Activated naive CD4-positive, alpha-beta T cell treated with anti-CD3 and anti-CD28 coated beads, Interleukin-2, amount 10 ng/mL, durations not matched to agents 7 days and 5 days (primary cell): ENCODE measurements at regions of chr10 and their contacts with region 1.

Region 1: GRCh38 chr10:70115948-70116682 is 16.5 kb downstream of the AIFM2 start:
- DNase-seq: peak; percentile 68
- H3K4me3 Mint-ChIP-seq: no peak overlapping the region
- H3K27ac Mint-ChIP-seq: no peak overlapping the region
- H3K4me1 Mint-ChIP-seq: peaks cover 10% of the 10 kb centered on the region
- H3K27me3 Mint-ChIP-seq: peaks cover 3% of the 10 kb centered on the region

Region 2: GRCh38 chr10:69968830-69969229 is 147.3 kb before region 1 on chr10:
- CTCF ChIA-PET with region 1: no interaction called
- DNase-seq: no peak
- H3K4me3 Mint-ChIP-seq: no peak overlapping the region
- H3K27ac Mint-ChIP-seq: no peak overlapping the region
- H3K4me1 Mint-ChIP-seq: no peaks in the 10 kb centered on the region
- H3K27me3 Mint-ChIP-seq: peaks cover 37% of the 10 kb centered on the region

Region 3: GRCh38 chr10:70093335-70093944 is 22.7 kb before region 1 on chr10:
- CTCF ChIA-PET with region 1: interaction called, 43 read pairs
- DNase-seq: peak; percentile 41
- H3K4me3 Mint-ChIP-seq: peak overlapping the region; percentile 78
- H3K27ac Mint-ChIP-seq: peak overlapping the region; percentile 82
- H3K4me1 Mint-ChIP-seq: peaks cover 37% of the 10 kb centered on the region
- H3K27me3 Mint-ChIP-seq: peaks cover 6% of the 10 kb centered on the region

Region 4: GRCh38 chr10:70135684-70136083 is 19.6 kb after region 1 on chr10:
- CTCF ChIA-PET with region 1: interaction called, 17 read pairs
- DNase-seq: no peak
- H3K4me3 Mint-ChIP-seq: no peak overlapping the region
- H3K27ac Mint-ChIP-seq: no peak overlapping the region
- H3K4me1 Mint-ChIP-seq: peaks cover 20% of the 10 kb centered on the region
- H3K27me3 Mint-ChIP-seq: peaks cover 28% of the 10 kb centered on the region

Region 5: GRCh38 chr10:70198696-70199466 is 82.8 kb after region 1 on chr10:
- CTCF ChIA-PET with region 1: interaction called, 17 read pairs
- DNase-seq: peak; percentile 32
- H3K4me3 Mint-ChIP-seq: no peak overlapping the region
- H3K27ac Mint-ChIP-seq: no peak overlapping the region
- H3K4me1 Mint-ChIP-seq: peaks cover 23% of the 10 kb centered on the region
- H3K27me3 Mint-ChIP-seq: no peaks in the 10 kb centered on the region